Naive thymus-derived CD4-positive, alpha-beta T cell (primary cell): ENCODE measurements at regions of chr12 and their contacts with region 1.

Region 1: GRCh38 chr12:57462251-57462911 is 2.8 kb downstream of the GLI1 start:
- DNase-seq: peak; percentile 75 to 92 (median 86)
- ATAC-seq: peak; percentile 84
- H3K4me3 ChIP-seq: peak overlapping the region; percentile 56
- H3K4me3 Mint-ChIP-seq: peak overlapping the region; percentile 78 to 93 (median 88)
- H3K27ac ChIP-seq: no peak overlapping the region
- H3K27ac Mint-ChIP-seq: peak overlapping the region; percentile 56 to 91 (median 70)
- H3K4me1 ChIP-seq: peaks cover 21 to 30% of the 10 kb centered on the region in 2 donors
- H3K4me1 Mint-ChIP-seq: peaks cover 35 to 55% (median 42%) of the 10 kb centered on the region in 7 donors
- H3K27me3 ChIP-seq: no peaks in the 10 kb centered on the region
- H3K27me3 Mint-ChIP-seq: peaks cover 0 to 22% (median 8%) of the 10 kb centered on the region in 5 donors

Region 2: GRCh38 chr12:57046947-57047890 is 415.2 kb before region 1 on chr12:
- CTCF ChIA-PET with region 1: no interaction called
- POLR2A ChIA-PET with region 1: no interaction called
- intact Hi-C with region 1: no loop called
- DNase-seq: peak in 5 of 9 donors; percentile 21 to 54 (median 37)
- ATAC-seq: peak; percentile 75
- H3K4me3 ChIP-seq: peak overlapping the region; percentile 11
- H3K4me3 Mint-ChIP-seq: peak overlapping the region; percentile 45 to 79 (median 59)
- H3K27ac ChIP-seq: no peak overlapping the region
- H3K27ac Mint-ChIP-seq: peak overlapping the region; percentile 71 to 93 (median 79)
- H3K4me1 ChIP-seq: peaks cover 19 to 20% of the 10 kb centered on the region in 2 donors
- H3K4me1 Mint-ChIP-seq: peaks cover 25 to 39% (median 34%) of the 10 kb centered on the region in 7 donors
- H3K27me3 ChIP-seq: no peaks in the 10 kb centered on the region
- H3K27me3 Mint-ChIP-seq: peaks cover 0 to 6% (median 0%) of the 10 kb centered on the region in 5 donors

Region 3: DNA sequence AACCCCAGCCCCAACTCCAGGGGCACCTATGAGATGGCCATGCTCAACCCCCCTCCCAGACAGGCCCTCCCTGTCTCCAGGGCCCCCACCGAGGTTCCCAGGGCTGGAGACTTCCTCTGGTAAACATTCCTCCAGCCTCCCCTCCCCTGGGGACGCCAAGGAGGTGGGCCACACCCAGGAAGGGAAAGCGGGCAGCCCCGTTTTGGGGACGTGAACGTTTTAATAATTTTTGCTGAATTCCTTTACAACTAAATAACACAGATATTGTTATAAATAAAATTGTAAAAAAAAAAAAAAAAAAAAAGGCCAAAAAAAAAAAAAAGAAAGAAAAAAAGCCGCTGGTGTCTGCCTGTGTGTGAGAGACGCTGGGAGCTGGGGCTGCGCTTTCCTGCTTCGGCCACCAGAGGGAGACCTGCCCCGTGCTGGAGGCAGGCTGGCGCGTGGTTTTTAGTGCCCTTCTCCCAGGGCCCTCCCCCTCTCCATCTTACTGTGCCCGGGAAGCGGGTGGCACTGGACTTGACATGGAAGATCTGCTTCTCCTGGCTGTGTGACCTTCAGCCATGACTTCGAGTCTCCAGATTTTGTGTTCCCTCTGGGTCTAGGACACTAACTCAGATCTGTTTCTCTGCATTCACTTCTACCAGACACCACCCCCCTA is 249.2 kb before region 1 on chr12:
- CTCF ChIA-PET with region 1: no interaction called
- POLR2A ChIA-PET with region 1: no interaction called
- intact Hi-C with region 1: loop called (anchors 2 kb)
- DNase-seq: peak; percentile 67 to 86 (median 81)
- ATAC-seq: peak; percentile 84
- H3K4me3 ChIP-seq: no peak overlapping the region
- H3K4me3 Mint-ChIP-seq: peak overlapping the region in 8 of 10 donors; percentile 5 to 42 (median 24)
- H3K27ac ChIP-seq: no peak overlapping the region
- H3K27ac Mint-ChIP-seq: peak overlapping the region in 4 of 9 donors; percentile 10 to 90 (median 50)
- H3K4me1 ChIP-seq: peaks cover 27 to 34% of the 10 kb centered on the region in 2 donors
- H3K4me1 Mint-ChIP-seq: peaks cover 28 to 40% (median 34%) of the 10 kb centered on the region in 7 donors
- H3K27me3 ChIP-seq: peaks cover 9 to 41% of the 10 kb centered on the region in 2 donors
- H3K27me3 Mint-ChIP-seq: peaks cover 38 to 45% (median 40%) of the 10 kb centered on the region in 5 donors

Region 4: DNA sequence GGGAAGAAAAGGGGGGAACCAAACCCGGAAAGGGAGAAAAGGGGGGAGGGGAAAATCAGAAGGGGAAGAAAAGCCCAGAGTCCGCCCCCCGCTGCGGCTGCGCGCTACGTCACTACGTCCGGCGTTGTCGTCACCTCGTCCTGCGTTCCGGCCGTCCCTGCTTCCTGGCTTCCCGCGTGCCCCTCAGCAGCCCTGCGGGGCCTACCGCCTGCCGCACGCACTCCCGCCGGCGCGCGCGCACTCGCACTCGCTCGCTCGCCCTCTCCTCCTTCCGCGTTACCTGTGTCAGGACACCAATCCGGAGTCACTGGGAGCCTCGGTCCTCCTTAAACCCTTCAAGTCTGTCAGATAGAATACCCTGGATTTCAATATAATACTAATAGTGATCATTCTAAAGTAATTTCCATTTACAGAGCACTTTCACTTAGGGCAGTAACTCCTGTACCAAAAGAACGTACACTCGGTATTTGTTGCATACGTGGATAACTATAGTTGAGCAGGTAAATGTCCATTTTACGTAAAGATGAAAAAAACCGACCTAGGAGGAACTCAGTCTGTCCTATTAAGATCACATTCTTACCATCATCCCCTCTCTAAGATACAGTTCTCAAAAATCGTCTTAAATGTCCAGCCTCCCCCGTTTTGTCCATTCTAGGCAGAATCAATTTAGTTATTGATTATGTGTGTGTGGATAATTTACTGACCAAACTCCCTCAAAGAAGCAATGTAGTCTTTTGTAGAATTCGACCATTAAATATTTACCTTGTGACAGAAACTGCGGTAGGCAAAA is 31.3 kb before region 1 on chr12 and contains the start of gene R3HDM2:
- CTCF ChIA-PET with region 1: interaction called, 11 read pairs
- POLR2A ChIA-PET with region 1: interaction called, 8 read pairs
- intact Hi-C with region 1: loop called (anchors 1 kb)
- DNase-seq: peak; percentile 83 to 96 (median 94)
- ATAC-seq: peak; percentile 95
- H3K4me3 ChIP-seq: peak within 1 kb of the TSS; percentile 55
- H3K4me3 Mint-ChIP-seq: peak within 1 kb of the TSS; percentile 88 to 100 (median 98)
- H3K27ac ChIP-seq: peak within 1 kb of the TSS; percentile 85
- H3K27ac Mint-ChIP-seq: peak within 1 kb of the TSS; percentile 97 to 100 (median 99)
- H3K4me1 ChIP-seq: peaks cover 8 to 17% of the 10 kb centered on the region in 2 donors
- H3K4me1 Mint-ChIP-seq: peaks cover 27 to 53% (median 39%) of the 10 kb centered on the region in 7 donors
- H3K27me3 ChIP-seq: no peaks in the 10 kb centered on the region
- H3K27me3 Mint-ChIP-seq: no peaks in the 10 kb centered on the region
- total RNA-seq, gene R3HDM2: 74.9 to 145 (median 120) TPM

Region 5: GRCh38 chr12:57520053-57520871 is 57.9 kb after region 1 on chr12 and contains the start of gene DDIT3:
- CTCF ChIA-PET with region 1: interaction called, 6 read pairs
- POLR2A ChIA-PET with region 1: interaction called, 6 read pairs
- intact Hi-C with region 1: loop called (anchors 1 kb)
- DNase-seq: peak; percentile 98 to 99 (median 99)
- ATAC-seq: peak; percentile 89
- H3K4me3 ChIP-seq: peak within 1 kb of the TSS; percentile 100
- H3K4me3 Mint-ChIP-seq: peak within 1 kb of the TSS; percentile 89 to 99 (median 98)
- H3K27ac ChIP-seq: peak within 1 kb of the TSS; percentile 95
- H3K27ac Mint-ChIP-seq: peak within 1 kb of the TSS; percentile 97 to 100 (median 99)
- H3K4me1 ChIP-seq: peaks cover 32 to 41% of the 10 kb centered on the region in 2 donors
- H3K4me1 Mint-ChIP-seq: peaks cover 47 to 80% (median 56%) of the 10 kb centered on the region in 7 donors
- H3K27me3 ChIP-seq: no peaks in the 10 kb centered on the region
- H3K27me3 Mint-ChIP-seq: peaks cover 0 to 7% (median 0%) of the 10 kb centered on the region in 5 donors
- total RNA-seq, gene DDIT3: 19.6 to 124 (median 51.6) TPM

Region 6: GRCh38 chr12:57621497-57622292 is 159.3 kb after region 1 on chr12:
- CTCF ChIA-PET with region 1: interaction called, 8 read pairs
- POLR2A ChIA-PET with region 1: no interaction called
- intact Hi-C with region 1: loop called (anchors 1 kb)
- DNase-seq: peak in 7 of 9 donors; percentile 35 to 75 (median 44)
- ATAC-seq: peak; percentile 76
- H3K4me3 ChIP-seq: peak overlapping the region; percentile 54
- H3K4me3 Mint-ChIP-seq: peak overlapping the region; percentile 59 to 87 (median 80)
- H3K27ac ChIP-seq: no peak overlapping the region
- H3K27ac Mint-ChIP-seq: no peak overlapping the region
- H3K4me1 ChIP-seq: peaks cover 20 to 30% of the 10 kb centered on the region in 2 donors
- H3K4me1 Mint-ChIP-seq: peaks cover 19 to 33% (median 30%) of the 10 kb centered on the region in 7 donors
- H3K27me3 ChIP-seq: peaks cover 17 to 50% of the 10 kb centered on the region in 2 donors
- H3K27me3 Mint-ChIP-seq: peaks cover 86 to 100% (median 87%) of the 10 kb centered on the region in 5 donors

Region 7: DNA sequence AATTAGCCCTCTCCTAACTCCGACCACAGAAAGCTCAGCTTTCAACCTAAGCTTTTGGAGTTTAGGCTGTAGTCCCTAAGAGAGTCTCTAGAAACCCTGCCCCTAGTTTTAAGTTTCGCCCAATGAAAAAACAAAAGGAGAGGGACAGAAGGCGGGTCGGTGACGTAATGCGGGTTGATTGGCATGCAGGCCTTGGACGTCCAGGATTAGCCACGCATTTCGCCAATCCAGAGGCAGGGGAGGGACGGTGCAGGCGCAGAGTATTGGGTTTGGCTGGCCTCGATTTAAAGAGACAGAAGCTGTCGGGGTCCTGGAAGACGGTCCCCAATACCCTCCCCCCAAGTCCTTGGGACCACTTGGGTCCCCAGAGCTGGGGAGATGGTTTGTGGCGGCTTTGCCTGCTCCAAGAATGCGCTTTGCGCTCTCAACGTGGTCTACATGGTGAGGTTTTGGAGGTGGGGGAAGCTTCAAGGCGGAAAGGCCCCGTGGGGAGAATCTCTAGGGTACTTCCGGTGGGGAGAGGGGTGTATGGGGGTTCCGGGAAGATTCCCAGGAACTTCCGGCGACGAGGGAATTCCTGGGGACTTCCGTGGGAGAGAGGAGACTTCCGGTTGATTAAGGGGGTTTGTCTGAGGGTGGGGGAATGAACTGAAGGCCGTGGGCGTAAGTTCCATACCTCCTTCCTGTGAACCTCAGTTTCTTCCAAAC is 282.6 kb after region 1 on chr12 and contains the start of gene TSPAN31:
- CTCF ChIA-PET with region 1: interaction called, 4 read pairs
- POLR2A ChIA-PET with region 1: interaction called, 3 read pairs
- intact Hi-C with region 1: loop called (anchors 1 kb)
- DNase-seq: peak; percentile 70 to 97 (median 94)
- ATAC-seq: peak; percentile 89
- H3K4me3 ChIP-seq: peak within 1 kb of the TSS; percentile 92
- H3K4me3 Mint-ChIP-seq: peak within 1 kb of the TSS; percentile 82 to 100 (median 91)
- H3K27ac ChIP-seq: peak within 1 kb of the TSS; percentile 91
- H3K27ac Mint-ChIP-seq: peak within 1 kb of the TSS; percentile 88 to 97 (median 95)
- H3K4me1 ChIP-seq: peaks cover 33 to 34% of the 10 kb centered on the region in 2 donors
- H3K4me1 Mint-ChIP-seq: peaks cover 35 to 64% (median 52%) of the 10 kb centered on the region in 7 donors
- H3K27me3 ChIP-seq: no peaks in the 10 kb centered on the region
- H3K27me3 Mint-ChIP-seq: no peaks in the 10 kb centered on the region
- total RNA-seq, gene TSPAN31: 12.3 to 23.9 (median 20.3) TPM